Activated CD4-positive, alpha-beta memory T cell treated with anti-CD3 and anti-CD28 coated beads for 36 hours (primary cell): ENCODE measurements at regions of chr1 and their contacts with region 1.

Region 1: GRCh38 chr1:206106328-206107167 is 10.6 kb downstream of the AVPR1B start:
- DNase-seq: peak; percentile 85
- H3K4me3 Mint-ChIP-seq: no peak overlapping the region
- H3K27ac Mint-ChIP-seq: no peak overlapping the region
- H3K4me1 Mint-ChIP-seq: no peaks in the 10 kb centered on the region
- H3K27me3 Mint-ChIP-seq: no peaks in the 10 kb centered on the region

Region 2: DNA sequence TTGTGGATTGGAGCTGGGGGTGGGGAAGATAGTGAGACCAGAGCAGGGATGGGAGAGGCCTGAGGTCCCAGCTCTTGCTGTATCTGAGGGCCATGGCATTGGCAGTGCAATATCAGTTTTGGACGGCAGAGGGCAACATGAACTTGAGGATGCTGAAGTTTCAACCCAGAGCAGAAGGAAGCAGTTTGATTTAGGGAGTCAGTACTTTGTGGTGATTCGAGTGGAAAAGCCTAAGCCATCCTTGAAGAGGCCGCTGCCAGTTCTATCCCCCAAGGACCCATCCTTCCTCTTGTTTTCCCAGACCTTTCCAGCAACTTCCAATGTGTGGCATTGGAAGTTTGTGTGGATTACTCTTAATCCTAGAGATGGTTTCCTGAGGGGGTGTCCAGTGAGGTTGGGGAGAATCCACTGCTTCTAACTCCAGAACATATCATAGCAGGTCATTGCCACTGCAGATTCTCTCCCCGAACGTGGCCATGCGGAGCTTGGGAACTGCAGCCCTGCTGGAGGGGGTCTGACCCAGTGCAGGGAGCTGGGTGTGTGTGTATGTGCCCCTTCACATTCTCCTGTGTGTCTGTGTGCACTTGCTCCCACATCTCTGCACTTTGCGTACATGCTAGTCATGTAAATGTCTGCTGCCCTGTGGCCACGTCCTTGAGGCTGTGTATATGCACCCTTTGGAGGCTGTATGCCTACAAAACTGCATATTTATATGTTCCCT is 187.4 kb before region 1 on chr1:
- CTCF ChIA-PET with region 1: interaction called, 32 read pairs
- POLR2A ChIA-PET with region 1: no interaction called
- intact Hi-C with region 1: loop called (anchors 1 kb)
- DNase-seq: peak; percentile 84
- H3K4me3 Mint-ChIP-seq: no peak overlapping the region
- H3K27ac Mint-ChIP-seq: no peak overlapping the region
- H3K4me1 Mint-ChIP-seq: no peaks in the 10 kb centered on the region
- H3K27me3 Mint-ChIP-seq: no peaks in the 10 kb centered on the region

Region 3: GRCh38 chr1:205983925-205984725 is 122.4 kb before region 1 on chr1:
- CTCF ChIA-PET with region 1: interaction called, 97 read pairs
- POLR2A ChIA-PET with region 1: interaction called, 3 read pairs
- intact Hi-C with region 1: loop called (anchors 1 kb)
- DNase-seq: peak; percentile 42
- H3K4me3 Mint-ChIP-seq: no peak overlapping the region
- H3K27ac Mint-ChIP-seq: no peak overlapping the region
- H3K4me1 Mint-ChIP-seq: no peaks in the 10 kb centered on the region
- H3K27me3 Mint-ChIP-seq: peaks cover 1% of the 10 kb centered on the region

Region 4: DNA sequence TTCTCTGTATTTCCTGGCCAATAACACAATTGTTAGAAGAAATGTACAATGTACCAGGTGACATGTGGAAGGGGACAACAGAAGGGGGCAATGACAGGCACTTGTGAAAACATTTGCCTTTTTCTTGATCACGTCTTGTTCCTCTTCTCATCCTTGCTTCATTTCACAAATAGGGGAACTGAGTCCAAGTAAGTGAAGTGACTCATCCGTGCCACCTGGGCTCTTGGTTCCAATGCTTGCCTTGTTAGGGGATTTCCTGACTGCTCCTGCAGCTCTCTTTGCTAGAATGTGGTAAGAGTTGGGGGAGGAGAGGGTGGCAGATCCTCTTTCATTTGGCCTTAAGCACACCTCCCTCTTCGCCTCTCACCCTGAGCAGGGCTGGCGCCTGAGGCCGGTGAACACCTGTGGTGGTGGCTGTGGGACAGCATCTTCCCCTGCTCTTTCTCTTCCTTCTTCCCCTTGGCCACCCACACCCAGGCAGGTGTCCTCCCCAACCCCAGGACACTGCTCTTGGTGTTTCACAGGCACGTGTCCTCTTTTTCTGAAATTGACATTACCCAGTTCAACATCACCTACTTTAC is 55.8 kb before region 1 on chr1:
- CTCF ChIA-PET with region 1: interaction called, 11 read pairs
- POLR2A ChIA-PET with region 1: no interaction called
- intact Hi-C with region 1: no loop called
- DNase-seq: peak; percentile 76
- H3K4me3 Mint-ChIP-seq: no peak overlapping the region
- H3K27ac Mint-ChIP-seq: peak overlapping the region; percentile 57
- H3K4me1 Mint-ChIP-seq: peaks cover 37% of the 10 kb centered on the region
- H3K27me3 Mint-ChIP-seq: no peaks in the 10 kb centered on the region